ENCODE measurements at regions of chr1 and their contacts with region 1.

Region 1: DNA sequence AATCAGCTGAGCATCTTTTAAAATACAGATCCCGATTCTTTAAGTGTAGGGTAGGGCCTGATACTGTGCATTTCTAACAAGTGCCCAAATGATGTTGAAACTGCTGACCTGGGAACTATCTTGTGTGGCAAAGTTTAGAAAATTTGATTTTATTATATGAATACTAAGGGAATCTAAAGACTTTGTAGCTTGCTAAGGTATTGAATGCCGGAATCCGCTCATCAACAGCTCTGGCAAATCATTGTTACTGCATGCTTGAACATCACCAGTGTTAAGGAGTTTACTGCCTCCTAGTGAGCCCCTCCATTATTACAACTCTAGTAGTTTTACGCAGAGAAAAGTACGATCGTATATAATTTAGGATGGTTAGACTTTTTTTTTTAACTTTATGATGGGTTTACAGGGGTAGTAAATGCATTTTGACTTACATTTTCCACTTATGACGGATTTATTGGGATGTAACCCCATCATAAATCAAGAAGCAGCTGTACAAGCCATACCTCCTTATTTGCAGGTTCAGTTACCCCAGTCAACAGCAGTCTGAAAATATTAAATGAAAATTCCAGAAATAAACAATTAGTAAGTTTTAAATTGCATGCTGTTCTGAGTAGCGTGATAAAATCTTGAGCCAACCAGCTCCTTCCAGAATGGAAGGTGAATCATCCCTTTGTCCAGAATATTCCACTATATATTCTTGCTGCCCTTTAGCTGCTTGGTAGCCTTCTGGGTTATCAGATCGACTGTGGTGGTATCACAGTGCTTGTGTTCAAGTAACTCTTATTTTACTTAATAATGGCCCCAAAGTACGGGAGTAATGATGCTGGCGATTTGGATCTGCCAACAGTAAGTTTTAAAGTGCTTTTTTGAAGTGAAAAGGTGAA is 892 bp downstream of the TYW3 start:
- DNase-seq: peak; percentile 19 to 82
- ATAC-seq: peak; percentile 71 to 87 (median 72)
- H3K4me3 ChIP-seq: peak overlapping the region; percentile 66
- H3K4me3 Mint-ChIP-seq: peak overlapping the region; percentile 99
- H3K27ac ChIP-seq: peak overlapping the region; percentile 78
- H3K27ac Mint-ChIP-seq: peak overlapping the region; percentile 86 to 98
- H3K4me1 ChIP-seq: peaks cover 13% of the 10 kb centered on the region
- H3K4me1 Mint-ChIP-seq: peaks cover 40 to 44% of the 10 kb centered on the region in 2 donors
- H3K27me3 ChIP-seq: no peaks in the 10 kb centered on the region
- H3K27me3 Mint-ChIP-seq: no peaks in the 10 kb centered on the region
- CTCF ChIP-seq: peak; percentile 72

Region 2: DNA sequence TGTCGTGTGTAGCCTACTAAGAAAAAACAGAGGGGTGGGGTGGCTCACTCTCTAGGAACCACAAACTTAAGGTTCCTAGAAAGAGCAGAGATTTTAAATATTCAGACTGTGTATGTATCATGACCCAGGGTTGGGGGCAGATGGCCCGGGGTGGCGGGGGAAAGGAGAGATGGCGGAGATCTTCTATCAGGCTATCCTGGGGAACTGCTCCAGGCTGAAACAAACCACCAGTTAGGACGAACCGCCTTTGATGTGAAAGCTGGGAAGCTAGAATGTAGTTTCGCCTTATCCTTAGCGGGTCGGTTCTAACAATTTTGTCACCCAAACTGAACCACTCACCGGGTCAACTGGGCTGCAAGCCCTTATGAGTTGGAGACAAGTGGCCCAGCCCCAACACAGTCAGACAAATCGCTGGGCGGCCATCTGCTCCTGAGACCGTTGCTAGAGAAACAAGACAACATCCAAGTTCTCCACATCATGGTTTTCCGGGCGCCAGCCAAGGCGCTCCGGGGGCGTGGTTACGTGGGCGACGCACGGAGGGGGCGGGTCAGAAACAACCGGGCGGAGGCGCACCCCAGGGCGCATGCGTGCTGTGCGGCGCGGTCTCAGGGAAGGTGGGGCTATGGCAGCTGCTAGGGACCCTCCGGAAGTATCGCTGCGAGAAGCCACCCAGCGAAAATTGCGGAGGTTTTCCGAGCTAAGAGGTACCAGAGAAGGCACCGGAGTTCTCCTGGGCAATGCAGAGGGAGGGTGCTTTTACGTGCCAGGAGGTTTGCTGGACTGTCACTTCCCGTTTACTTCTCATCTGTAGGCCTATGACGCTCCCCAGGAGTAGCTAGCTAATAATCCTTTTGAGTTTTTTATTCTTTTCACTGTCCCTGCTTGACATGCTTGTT is 535.9 kb before region 1 on chr1 and contains the starts of genes FPGT and LRRIQ3:
- intact Hi-C with region 1: loop called (anchors 5 kb)
- DNase-seq: peak; percentile 92 to 98
- ATAC-seq: peak; percentile 97 to 100 (median 97)
- H3K4me3 ChIP-seq: peak within 1 kb of the TSS; percentile 75
- H3K4me3 Mint-ChIP-seq: peak within 1 kb of the TSS; percentile 95
- H3K27ac ChIP-seq: peak within 1 kb of the TSS; percentile 82
- H3K27ac Mint-ChIP-seq: peak within 1 kb of the TSS; percentile 92 to 93
- H3K4me1 ChIP-seq: peaks cover 4% of the 10 kb centered on the region
- H3K4me1 Mint-ChIP-seq: peaks cover 18 to 25% of the 10 kb centered on the region in 2 donors
- H3K27me3 ChIP-seq: no peaks in the 10 kb centered on the region
- H3K27me3 Mint-ChIP-seq: peaks cover 0 to 8% of the 10 kb centered on the region in 2 donors
- CTCF ChIP-seq: no peak
- total RNA-seq, gene FPGT: 3.0 to 5.4 (median 3.5) TPM
- total RNA-seq, gene LRRIQ3: 0.16 to 0.85 (median 0.59) TPM

Region 3: DNA sequence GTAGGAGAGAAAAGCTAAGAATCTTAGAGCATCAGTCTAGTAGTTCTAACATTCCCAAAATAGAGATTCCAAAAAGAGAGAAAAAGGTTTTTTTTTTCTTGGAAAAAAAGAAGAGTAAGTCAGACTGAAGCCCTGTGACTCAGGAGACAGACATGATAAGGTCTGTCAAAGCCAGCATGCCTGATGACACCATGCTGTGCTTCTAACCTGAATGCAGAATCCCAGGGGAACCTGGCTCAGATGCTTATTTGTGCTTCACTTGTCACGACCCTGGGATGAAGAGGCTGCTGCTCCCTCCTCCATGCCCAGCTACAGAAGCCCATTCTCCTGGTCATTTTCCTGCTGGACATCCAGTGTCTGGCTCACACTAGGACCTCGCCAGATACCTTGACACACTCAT is 104.6 kb before region 1 on chr1:
- intact Hi-C with region 1: no loop called
- DNase-seq: no peak
- ATAC-seq: no peak
- H3K4me3 ChIP-seq: no peak overlapping the region
- H3K4me3 Mint-ChIP-seq: no peak overlapping the region
- H3K27ac ChIP-seq: no peak overlapping the region
- H3K27ac Mint-ChIP-seq: no peak overlapping the region
- H3K4me1 ChIP-seq: no peaks in the 10 kb centered on the region
- H3K4me1 Mint-ChIP-seq: no peaks in the 10 kb centered on the region
- H3K27me3 ChIP-seq: no peaks in the 10 kb centered on the region
- H3K27me3 Mint-ChIP-seq: peaks cover 0 to 3% of the 10 kb centered on the region in 2 donors
- CTCF ChIP-seq: no peak